ENCODE measurements at regions of chr15 and their contacts with region 1.

Region 1: DNA sequence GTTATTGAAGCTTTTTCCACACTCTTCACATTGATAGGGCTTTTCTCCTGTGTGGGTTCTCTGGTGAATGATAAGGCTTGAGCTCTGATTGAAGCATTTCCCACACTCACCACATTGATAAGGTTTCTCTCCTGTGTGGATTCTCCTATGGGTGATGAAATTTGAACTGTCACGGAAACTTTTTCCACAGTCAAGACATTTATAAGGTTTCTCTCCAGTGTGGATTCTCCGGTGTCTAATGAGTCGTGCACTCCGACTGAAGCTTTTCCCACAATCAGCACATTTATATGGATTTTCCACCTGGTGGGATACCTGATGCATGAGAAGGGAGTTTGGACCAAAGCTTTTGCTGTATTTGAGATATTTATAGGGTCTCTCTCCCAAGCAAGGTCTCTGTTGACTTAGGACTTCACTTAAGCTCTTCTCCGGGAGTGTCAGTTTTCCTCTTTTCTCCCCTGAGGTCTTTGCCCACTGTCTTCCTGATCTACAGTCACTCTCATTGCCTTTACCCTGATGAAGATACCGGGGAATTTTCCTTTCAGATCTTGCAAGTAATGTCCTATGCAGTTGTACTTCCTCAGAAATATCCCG is 9.4 kb downstream of the ZSCAN29 start:
- DNase-seq: no peak
- ATAC-seq: no peak
- H3K4me3 ChIP-seq: no peak overlapping the region
- H3K27ac ChIP-seq: no peak overlapping the region
- H3K4me1 ChIP-seq: no peaks in the 10 kb centered on the region
- H3K27me3 ChIP-seq: no peaks in the 10 kb centered on the region
- CTCF ChIP-seq: no peak
- POLR2A ChIP-seq: no peak
- RAD21 ChIP-seq: no peak

Region 2: GRCh38 chr15:43346305-43346704 is 15.1 kb before region 1 on chr15:
- CTCF ChIA-PET with region 1: interaction called, 10 read pairs
- POLR2A ChIA-PET with region 1: no interaction called
- RAD21 ChIA-PET with region 1: no interaction called
- intact Hi-C with region 1: no loop called
- DNase-seq: no peak
- ATAC-seq: peak; percentile 78
- H3K4me3 ChIP-seq: no peak overlapping the region
- H3K27ac ChIP-seq: no peak overlapping the region
- H3K4me1 ChIP-seq: no peaks in the 10 kb centered on the region
- H3K27me3 ChIP-seq: no peaks in the 10 kb centered on the region
- CTCF ChIP-seq: peak; percentile 34 to 90 (median 38); a peak in 5 of 6 replicates
- POLR2A ChIP-seq: no peak
- RAD21 ChIP-seq: peak; percentile 60